ENCODE measurements at regions of chr22 and their contacts with region 1.

Region 1: DNA sequence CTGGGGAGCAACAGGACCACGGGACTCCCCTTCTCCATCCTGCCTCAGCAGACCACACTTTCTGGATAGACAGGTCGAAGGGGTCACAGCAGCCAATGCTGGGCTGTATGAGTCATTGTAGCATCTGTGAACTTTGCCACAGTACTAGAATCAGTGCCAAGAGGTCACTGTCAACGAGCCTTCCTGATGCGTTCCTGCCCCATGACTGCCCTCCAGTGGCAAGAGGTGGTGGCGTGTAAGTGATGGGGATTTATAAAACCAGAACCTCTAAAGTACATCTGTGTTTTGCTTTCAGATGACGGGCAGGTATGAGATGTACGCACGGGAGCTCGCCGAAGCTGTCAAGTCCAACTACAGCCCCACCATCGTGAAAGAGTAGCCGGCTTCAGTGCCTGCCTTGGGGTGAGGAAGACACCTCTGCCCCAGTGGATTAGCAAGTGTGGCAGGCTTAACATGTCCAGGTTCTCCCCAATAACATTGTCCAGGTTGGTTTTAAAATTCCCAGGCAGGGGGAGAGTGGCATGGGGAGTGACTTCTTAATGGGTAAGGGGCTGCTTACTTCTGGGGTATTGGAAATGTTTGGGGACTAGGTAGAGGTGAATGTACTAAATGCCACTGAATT is 29.4 kb downstream of the GUCD1 start:
- DNase-seq: no peak
- H3K4me3 ChIP-seq: no peak overlapping the region
- H3K27me3 ChIP-seq: no peaks in the 10 kb centered on the region; the same call in 1 of the 2 replicates
- CTCF ChIP-seq: peak; percentile 89

Region 2: DNA sequence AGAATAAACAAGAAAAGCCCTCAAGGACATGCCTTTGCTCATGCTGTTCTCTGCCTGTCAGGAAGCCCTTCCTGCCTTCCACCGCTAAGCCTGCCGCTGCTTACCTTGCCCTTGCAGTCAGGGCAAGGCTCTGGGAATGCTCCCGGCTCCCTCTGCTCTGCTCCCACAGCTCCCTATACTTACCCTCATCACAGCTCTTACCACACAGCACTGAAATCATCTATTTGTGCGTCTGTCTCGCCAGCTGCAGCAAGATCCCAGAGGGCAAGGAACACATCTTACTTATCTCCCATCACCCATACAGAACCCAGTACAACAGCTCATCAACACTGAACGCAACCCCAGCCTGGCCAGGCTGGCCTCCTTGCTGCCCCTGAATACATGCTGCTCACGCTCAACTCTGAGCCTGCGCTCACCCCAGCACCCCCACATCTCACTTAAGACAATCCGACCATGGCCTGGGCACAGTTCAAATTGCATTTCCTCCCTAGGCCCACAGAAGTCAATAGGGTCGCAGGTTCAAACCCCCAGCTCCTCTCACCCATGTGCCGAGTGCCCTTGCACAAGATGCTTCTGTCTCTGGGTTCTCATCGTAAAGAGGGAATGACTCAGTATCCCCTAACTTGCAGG is 1107.3 kb before region 1 on chr22:
- CTCF ChIA-PET with region 1: no interaction called
- POLR2A ChIA-PET with region 1: no interaction called
- DNase-seq: no peak
- H3K4me3 ChIP-seq: no peak overlapping the region
- H3K27me3 ChIP-seq: peaks cover 5% of the 10 kb centered on the region; the same call in 1 of the 2 replicates
- CTCF ChIP-seq: no peak

Region 3: GRCh38 chr22:24216541-24217209 is 308.9 kb before region 1 on chr22:
- CTCF ChIA-PET with region 1: no interaction called
- POLR2A ChIA-PET with region 1: no interaction called
- DNase-seq: no peak
- H3K4me3 ChIP-seq: no peak overlapping the region
- H3K27me3 ChIP-seq: no peaks in the 10 kb centered on the region
- CTCF ChIP-seq: no peak

Region 4: DNA sequence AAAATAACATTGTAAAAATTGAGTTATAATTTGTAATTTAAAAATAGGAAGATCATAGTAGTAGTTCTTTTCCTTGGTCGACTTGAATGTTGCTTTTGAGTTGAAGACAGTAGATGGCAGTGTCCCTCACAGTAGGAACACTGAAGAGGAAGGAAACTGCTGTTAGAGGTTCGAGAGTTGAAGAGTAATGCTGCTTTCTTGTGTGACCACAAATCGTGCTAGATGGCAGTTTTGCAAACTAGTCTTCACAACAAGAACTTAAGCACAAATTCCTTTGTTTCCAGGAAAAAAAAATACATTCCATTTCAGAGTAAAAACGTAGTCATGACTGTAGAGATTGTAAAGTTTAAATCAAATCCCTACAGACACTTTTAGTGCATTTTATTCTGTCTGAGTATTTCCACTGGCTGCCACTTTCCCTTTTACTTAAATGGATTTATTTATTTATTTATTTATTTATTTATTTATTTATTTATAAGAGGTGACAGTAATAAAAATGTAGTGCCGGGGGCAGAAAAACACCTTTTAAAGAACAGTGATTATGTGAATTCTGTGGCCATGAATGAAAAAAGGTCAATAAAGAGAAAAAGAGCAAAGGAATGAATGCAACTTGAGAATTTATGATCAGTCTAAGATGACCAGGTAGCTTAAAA is 200.3 kb before region 1 on chr22:
- CTCF ChIA-PET with region 1: interaction called, 11 read pairs
- POLR2A ChIA-PET with region 1: no interaction called
- DNase-seq: peak; percentile 99
- H3K4me3 ChIP-seq: no peak overlapping the region
- H3K27me3 ChIP-seq: no peaks in the 10 kb centered on the region
- CTCF ChIP-seq: peak; percentile 73

Region 5: DNA sequence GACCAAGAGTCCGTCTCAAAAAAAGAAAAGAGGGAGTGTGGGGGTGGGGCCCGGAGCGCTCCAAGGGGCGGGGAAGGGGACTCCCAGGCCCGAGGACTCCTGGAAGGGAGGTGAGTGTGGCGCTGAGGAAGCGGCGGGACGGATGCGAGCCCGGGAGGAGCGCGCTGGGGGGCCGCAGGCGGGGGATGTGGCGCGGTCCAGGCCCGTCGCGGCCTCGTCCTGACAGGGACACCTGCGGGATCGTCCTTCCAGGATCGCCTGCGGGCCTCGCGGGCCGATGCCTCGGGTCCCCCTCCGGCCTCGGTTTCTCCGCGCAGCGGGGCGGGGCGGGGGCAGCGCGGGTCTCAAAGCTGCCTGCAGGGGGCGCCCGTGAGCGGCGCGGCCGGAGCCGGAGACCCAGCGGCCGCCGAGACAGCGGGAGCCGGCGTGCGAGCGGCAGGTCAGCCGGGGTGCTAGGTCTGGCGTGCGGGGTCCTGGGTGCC is 102.0 kb before region 1 on chr22:
- CTCF ChIA-PET with region 1: interaction called, 20 read pairs
- POLR2A ChIA-PET with region 1: no interaction called
- DNase-seq: no peak
- H3K4me3 ChIP-seq: peak overlapping the region; percentile 56
- H3K27me3 ChIP-seq: peaks cover 7% of the 10 kb centered on the region
- CTCF ChIP-seq: peak; percentile 43

Region 6: GRCh38 chr22:24433813-24434470 is 91.6 kb before region 1 on chr22:
- CTCF ChIA-PET with region 1: no interaction called
- POLR2A ChIA-PET with region 1: interaction called, 13 read pairs
- DNase-seq: no peak
- H3K4me3 ChIP-seq: no peak overlapping the region
- H3K27me3 ChIP-seq: no peaks in the 10 kb centered on the region
- CTCF ChIP-seq: no peak

Region 7: DNA sequence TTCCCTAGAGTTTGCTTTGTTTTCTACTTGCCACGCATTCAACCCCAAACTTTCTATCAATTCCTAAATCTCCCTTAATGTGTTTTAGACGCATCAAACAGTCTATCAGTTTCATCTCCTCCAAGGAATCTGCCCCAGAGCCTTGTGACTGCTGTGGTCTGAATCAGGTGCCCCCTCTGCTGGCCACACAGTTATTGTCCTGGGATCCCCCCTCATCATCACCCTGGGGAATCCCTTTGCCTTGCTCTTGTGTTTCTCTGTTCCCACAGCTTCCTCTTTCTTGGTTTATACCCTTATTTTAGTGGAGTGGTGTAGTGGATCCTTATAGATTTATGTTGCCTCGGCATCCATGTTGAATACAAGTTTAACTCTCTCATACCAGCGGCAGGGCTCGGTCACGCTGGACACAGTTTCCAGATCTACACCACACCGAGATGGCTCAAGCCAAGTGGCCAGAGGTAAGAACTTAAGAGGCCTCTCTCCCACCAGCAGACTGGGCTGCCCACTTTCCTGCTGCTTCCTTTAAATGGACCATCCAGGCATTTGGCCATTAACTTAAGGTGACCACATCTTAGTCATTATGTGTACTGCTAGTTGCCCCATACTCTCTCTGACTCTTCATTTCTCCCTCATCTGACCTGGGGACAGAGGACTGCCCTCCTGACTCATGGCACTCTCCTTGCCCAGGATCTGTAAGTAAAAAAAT is 22.2 kb before region 1 on chr22:
- CTCF ChIA-PET with region 1: interaction called, 10 read pairs
- POLR2A ChIA-PET with region 1: no interaction called
- DNase-seq: no peak
- H3K4me3 ChIP-seq: no peak overlapping the region
- H3K27me3 ChIP-seq: no peaks in the 10 kb centered on the region
- CTCF ChIP-seq: peak; percentile 81